Mammary epithelial cell (primary cell): ENCODE measurements at regions of chr9 and their contacts with region 1.

Region 1: GRCh38 chr9:92481040-92481633 is 1.2 kb downstream of the ASPN start:
- DNase-seq: peak; percentile 31
- H3K4me3 ChIP-seq: peak overlapping the region in 1 of 3 experiments; percentile 11
- H3K27ac ChIP-seq: peak overlapping the region; percentile 66
- H3K4me1 ChIP-seq: peaks cover 15% of the 10 kb centered on the region
- H3K27me3 ChIP-seq: no peaks in the 10 kb centered on the region
- CTCF ChIP-seq: no peak

Region 2: DNA sequence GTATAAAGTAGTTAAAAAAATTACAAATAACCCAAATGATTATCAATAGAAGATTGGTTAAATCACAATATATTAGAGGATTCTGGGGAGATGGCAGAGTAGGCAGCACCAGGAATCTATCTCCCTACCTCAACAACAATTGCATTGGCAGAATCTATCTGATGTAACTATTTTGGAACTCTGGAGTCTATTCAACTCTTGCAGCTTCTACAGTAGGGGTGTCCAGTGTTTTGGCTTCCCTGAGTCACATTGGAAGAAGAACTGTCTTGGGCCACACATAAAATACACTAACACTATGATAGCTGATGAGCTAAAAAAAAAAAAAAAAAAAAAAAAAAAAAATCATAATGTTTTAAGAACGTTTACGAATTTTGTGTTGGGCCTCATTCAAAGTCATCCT is 83.8 kb after region 1 on chr9:
- CTCF ChIA-PET with region 1: no interaction called
- dilution Hi-C with region 1: loop called (anchors 5 kb)
- in situ Hi-C with region 1: no loop called
- intact Hi-C with region 1: no loop called
- DNase-seq: no peak
- H3K4me3 ChIP-seq: no peak overlapping the region
- H3K27ac ChIP-seq: no peak overlapping the region
- H3K4me1 ChIP-seq: peaks cover 4% of the 10 kb centered on the region
- H3K27me3 ChIP-seq: no peaks in the 10 kb centered on the region
- CTCF ChIP-seq: no peak